PC-9 (cell line): ENCODE measurements at regions of chr3 and their contacts with region 1.

Region 1: GRCh38 chr3:184289426-184289938 is 9.6 kb upstream of the PSMD2 start:
- DNase-seq: peak; percentile 63 to 75
- H3K4me3 ChIP-seq: no peak overlapping the region
- H3K27ac ChIP-seq: no peak overlapping the region
- H3K4me1 ChIP-seq: no peaks in the 10 kb centered on the region
- H3K27me3 ChIP-seq: no peaks in the 10 kb centered on the region; the same call in 1 of the 2 replicates
- CTCF ChIP-seq: peak; percentile 81

Region 2: GRCh38 chr3:183158551-183159006 is 1130.9 kb before region 1 on chr3:
- CTCF ChIA-PET with region 1: no interaction called
- POLR2A ChIA-PET with region 1: no interaction called
- intact Hi-C with region 1: no loop called
- DNase-seq: peak in 1 of 2 experiments; percentile 16
- H3K4me3 ChIP-seq: no peak overlapping the region
- H3K27ac ChIP-seq: no peak overlapping the region
- H3K4me1 ChIP-seq: peaks cover 7% of the 10 kb centered on the region; the same call in 1 of the 2 replicates
- H3K27me3 ChIP-seq: no peaks in the 10 kb centered on the region
- CTCF ChIP-seq: no peak

Region 3: DNA sequence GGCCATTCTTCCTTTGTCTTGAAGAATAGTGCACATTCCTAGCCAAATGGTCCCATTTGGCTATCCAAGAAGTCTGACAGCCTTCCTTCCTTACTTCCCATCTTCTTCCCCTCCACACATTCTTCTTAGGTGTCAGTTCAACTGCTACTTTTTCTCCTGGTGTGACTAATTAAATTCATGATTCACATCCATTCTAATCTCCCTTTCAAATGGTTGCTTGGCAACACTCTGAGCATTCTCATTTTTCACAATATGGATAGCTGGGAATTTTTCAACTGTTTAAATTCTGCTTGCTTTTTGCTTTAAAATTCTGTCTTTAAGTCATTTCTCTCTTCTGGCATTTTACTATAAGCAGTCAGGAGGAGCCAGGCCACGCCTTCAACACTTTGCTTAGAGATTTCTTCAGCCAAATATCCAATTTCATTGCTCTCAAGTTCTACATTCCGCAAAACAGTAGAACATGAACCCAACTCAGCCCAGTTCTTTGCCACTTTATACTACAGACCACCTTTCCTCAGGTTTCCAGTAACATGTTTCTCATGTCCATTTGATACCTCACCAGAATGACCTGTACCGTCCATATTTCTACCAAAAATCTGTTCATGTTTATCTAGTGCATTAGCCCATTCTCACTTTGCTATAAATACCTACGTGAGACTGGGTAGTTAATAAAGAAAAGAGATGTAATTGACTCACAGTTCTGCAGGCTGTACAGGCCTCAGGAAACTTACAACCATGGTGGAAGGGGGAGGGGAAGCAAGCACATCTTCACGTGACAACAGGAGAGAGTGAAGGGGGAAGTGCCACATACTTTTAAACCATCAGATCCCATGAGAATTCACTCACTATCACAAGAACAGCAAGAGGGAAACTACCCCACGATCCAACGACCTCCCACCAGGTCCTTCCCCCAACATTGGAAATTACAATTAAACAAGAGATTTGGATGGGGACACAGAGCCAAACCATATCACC is 829.1 kb before region 1 on chr3:
- CTCF ChIA-PET with region 1: no interaction called
- POLR2A ChIA-PET with region 1: no interaction called
- intact Hi-C with region 1: loop called (anchors 10 kb)
- DNase-seq: peak in 1 of 2 experiments; percentile 50
- H3K4me3 ChIP-seq: no peak overlapping the region
- H3K27ac ChIP-seq: no peak overlapping the region
- H3K4me1 ChIP-seq: no peaks in the 10 kb centered on the region
- H3K27me3 ChIP-seq: no peaks in the 10 kb centered on the region
- CTCF ChIP-seq: no peak

Region 4: DNA sequence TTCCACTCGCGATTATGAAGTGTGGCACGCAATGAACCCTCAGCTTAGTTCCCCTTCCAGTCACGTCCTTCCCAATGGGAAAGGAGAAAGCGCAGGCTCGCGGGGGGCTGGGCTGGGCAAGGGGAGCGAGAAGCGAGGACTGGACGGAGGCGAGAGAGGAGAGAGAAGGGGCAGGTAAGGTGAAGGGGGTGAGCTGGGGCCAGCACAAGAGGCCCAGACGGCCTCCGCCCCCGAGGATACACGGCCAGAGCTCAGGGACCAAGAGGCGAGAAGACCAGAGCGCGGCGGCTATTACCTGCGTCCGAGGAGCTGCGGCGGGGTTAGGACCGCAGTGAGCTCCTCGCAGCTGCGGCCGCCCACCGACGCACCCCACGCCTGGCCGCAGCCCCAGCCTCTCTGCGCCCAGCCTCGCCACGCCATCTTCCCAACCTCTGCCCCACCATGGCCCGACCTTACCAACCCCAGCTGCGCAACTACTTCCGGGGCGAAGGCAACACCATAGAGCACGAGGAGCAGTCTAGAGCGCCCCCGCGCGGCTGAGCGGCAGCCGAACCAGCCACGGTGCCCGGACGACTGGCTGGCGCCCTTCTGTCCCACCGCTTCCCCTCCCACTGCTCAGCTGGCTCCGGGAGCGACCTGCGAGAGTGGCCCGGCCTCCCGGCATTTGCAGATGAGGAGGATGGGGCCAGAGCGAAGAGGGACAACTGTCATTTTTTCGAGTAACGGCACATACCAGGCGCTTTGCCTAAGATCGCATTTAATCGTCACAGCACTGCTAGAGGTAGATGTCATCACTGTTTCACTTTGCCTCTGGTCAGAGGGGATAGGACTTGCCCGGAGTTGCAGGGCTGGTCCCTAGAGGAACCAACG is 404.8 kb before region 1 on chr3 and contains the start of gene PARL:
- CTCF ChIA-PET with region 1: interaction called, 3 read pairs
- POLR2A ChIA-PET with region 1: no interaction called
- intact Hi-C with region 1: loop called (anchors 1 kb)
- DNase-seq: peak; percentile 86 to 98
- H3K4me3 ChIP-seq: peak within 1 kb of the TSS; percentile 96
- H3K27ac ChIP-seq: peak within 1 kb of the TSS; percentile 33
- H3K4me1 ChIP-seq: peaks cover 15% of the 10 kb centered on the region
- H3K27me3 ChIP-seq: no peaks in the 10 kb centered on the region
- CTCF ChIP-seq: peak; percentile 97
- total RNA-seq, gene PARL: 109 and 180 TPM in 2 replicates

Region 5: DNA sequence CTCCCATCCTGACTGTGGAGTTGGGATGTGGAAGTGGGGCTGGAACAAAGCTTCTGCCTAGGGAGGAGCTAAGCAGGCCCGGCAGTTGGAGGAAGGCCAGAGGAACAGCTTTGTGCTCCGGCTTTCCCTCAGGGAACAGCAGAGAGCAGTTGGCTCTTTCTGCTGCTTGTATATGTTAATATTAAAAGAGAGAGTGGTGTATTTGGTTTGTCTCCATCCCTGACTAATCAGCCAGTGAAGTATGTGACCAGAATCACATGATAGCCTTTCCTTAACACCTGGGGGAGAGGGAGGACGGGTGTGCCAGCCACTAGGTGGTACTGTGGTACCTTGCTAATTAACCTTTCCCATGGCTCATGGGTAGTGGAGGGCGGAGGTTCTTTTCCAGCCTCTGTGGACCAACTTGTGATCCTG is 144.4 kb before region 1 on chr3:
- CTCF ChIA-PET with region 1: no interaction called
- POLR2A ChIA-PET with region 1: no interaction called
- intact Hi-C with region 1: loop called (anchors 1 kb)
- DNase-seq: peak; percentile 71 to 74
- H3K4me3 ChIP-seq: no peak overlapping the region
- H3K27ac ChIP-seq: no peak overlapping the region
- H3K4me1 ChIP-seq: no peaks in the 10 kb centered on the region
- H3K27me3 ChIP-seq: no peaks in the 10 kb centered on the region
- CTCF ChIP-seq: peak; percentile 79

Region 6: GRCh38 chr3:184261270-184261853 is 28.1 kb before region 1 on chr3 and contains the start of gene CAMK2N2:
- CTCF ChIA-PET with region 1: interaction called, 14 read pairs
- POLR2A ChIA-PET with region 1: no interaction called
- intact Hi-C with region 1: no loop called
- DNase-seq: peak; percentile 78 to 82
- H3K4me3 ChIP-seq: peak within 1 kb of the TSS; percentile 93
- H3K27ac ChIP-seq: no peak within 1 kb of the TSS
- H3K4me1 ChIP-seq: peaks cover 15% of the 10 kb centered on the region; the same call in 1 of the 2 replicates
- H3K27me3 ChIP-seq: no peaks in the 10 kb centered on the region
- CTCF ChIP-seq: no peak
- total RNA-seq, gene CAMK2N2: 2.2 and 2.6 TPM in 2 replicates

Region 7: GRCh38 chr3:184459355-184459754 is 169.9 kb after region 1 on chr3:
- CTCF ChIA-PET with region 1: no interaction called
- POLR2A ChIA-PET with region 1: no interaction called
- intact Hi-C with region 1: no loop called
- DNase-seq: no peak
- H3K4me3 ChIP-seq: no peak overlapping the region
- H3K27ac ChIP-seq: no peak overlapping the region
- H3K4me1 ChIP-seq: no peaks in the 10 kb centered on the region
- H3K27me3 ChIP-seq: no peaks in the 10 kb centered on the region
- CTCF ChIP-seq: no peak

Region 8: DNA sequence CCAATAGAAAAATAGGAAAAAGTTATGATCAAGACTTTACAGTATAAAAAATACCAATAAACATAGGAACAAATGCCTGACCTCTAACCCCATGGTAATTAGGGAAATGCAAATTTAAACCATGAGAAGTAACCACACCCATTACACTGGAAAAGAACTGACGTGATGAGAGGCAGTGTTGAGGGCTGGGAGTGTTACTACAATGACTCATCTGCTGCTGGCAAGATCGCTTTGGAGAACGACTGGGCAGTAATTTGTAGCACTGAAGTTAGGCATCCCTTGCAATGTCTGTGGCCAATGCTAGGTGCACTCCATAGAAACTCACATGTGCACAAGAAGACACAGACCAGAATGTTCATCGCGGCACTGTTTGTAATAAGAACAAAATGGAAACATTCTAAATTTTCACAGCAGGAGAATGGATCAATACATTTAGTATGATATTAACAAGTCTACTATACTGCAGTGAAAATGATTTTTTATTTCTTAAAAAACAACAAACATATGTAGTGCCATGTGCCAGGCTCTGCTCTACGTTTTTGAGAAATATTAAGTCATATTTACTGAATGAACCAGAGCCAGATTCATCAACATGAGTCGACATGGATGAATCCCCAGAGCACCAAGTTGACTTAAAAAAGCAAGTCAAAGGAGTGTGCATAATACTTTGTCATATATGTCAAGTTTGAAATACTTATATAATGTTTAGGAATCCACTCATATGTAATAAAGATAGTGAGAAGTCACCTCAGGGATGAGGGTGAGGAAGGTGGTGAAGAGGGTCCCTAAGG is 234.5 kb after region 1 on chr3:
- CTCF ChIA-PET with region 1: interaction called, 10 read pairs
- POLR2A ChIA-PET with region 1: no interaction called
- intact Hi-C with region 1: no loop called
- DNase-seq: peak in 1 of 2 experiments; percentile 54
- H3K4me3 ChIP-seq: no peak overlapping the region
- H3K27ac ChIP-seq: no peak overlapping the region
- H3K4me1 ChIP-seq: no peaks in the 10 kb centered on the region
- H3K27me3 ChIP-seq: peaks cover 78% of the 10 kb centered on the region
- CTCF ChIP-seq: no peak

Region 9: DNA sequence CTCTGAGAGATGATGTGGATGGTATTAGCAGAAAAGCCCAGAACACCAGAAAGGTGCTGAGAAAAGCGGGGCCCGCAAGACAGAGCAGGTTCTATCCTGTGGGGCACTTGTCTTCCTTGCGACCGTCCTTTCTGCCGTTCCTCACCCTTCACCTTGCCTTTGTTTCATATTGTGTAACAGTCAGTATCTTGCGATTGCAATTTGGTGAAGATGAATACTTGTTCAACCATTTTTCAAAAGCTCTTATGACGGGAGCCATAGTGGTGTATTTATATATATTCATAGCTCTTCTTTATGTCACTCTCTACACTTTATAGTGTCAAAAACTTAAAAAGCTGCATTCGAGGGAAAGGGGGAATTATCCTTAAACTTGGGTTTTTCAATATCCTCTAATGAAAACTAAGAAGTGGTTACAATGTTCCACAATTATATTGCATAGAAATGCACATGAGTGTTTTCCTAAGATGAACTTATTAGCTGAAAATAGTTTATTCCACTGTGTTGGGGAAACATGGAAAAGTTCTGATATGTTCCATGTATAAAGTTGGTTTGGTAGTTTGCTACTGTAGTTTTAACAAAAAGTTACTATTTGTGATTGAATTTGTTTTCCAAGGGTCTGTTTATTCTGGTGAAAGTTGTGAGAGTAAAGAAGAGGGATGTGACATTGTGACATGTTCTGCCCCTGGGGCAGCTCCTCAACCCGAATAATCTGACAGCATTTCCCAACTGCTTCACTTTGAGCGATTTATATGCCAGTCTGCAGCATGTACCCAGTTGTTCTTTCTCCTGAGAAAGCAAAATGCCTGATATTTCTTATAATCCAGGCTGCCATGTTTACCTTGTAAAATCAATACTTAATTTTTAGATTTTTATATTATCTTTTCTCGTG is 1074.4 kb after region 1 on chr3:
- CTCF ChIA-PET with region 1: no interaction called
- POLR2A ChIA-PET with region 1: no interaction called
- intact Hi-C with region 1: no loop called
- DNase-seq: peak in 1 of 2 experiments; percentile 60
- H3K4me3 ChIP-seq: peak overlapping the region; percentile 66
- H3K27ac ChIP-seq: peak overlapping the region; percentile 55
- H3K4me1 ChIP-seq: peaks cover 24% of the 10 kb centered on the region
- H3K27me3 ChIP-seq: no peaks in the 10 kb centered on the region
- CTCF ChIP-seq: no peak